Left cardiac atrium (tissue), 4 donors: ENCODE measurements at regions of chr9 and their contacts with region 1.

Region 1: DNA sequence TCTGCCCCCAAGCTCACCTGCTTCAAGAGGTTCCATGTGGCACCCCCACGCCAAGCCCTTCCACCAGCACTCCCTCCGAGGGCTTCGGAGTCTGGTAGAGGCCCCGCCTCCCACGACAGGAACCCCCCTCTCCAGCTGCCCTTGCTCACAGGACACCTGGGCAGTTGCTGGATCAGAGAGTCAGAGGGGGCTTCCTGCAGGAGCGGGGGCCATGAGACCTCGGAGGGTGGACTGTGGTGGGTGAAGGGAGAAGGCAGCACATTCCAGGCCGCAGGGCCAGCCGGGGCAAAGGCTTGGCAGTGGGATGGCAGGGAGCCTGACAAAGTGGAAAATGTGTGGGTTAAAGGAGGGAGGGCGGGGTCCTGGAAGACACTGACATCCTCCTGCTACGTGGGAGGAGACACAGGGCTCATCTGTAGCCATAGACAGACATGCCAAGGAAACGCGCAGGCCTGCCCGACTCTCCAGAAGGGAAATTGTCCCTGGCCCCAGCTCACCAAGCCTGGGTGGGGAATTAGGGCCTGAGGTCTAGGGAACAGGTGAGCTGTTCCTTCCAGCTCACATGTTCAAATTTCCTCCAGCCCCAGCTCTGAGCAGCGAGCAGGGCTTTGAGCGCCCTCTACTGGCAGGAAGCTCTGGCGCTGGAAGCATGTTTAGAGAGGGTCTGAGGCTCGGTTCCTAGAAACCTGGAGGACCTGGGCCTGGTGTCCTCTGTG is 74.2 kb downstream of the NTNG2 start:
- DNase-seq: peak; percentile 77
- ATAC-seq: peak in 1 of 2 donors; percentile 7

Region 2: GRCh38 chr9:131370638-131371037 is 865.5 kb before region 1 on chr9:
- intact Hi-C with region 1: no loop called
- DNase-seq: no peak
- ATAC-seq: no peak

Region 3: DNA sequence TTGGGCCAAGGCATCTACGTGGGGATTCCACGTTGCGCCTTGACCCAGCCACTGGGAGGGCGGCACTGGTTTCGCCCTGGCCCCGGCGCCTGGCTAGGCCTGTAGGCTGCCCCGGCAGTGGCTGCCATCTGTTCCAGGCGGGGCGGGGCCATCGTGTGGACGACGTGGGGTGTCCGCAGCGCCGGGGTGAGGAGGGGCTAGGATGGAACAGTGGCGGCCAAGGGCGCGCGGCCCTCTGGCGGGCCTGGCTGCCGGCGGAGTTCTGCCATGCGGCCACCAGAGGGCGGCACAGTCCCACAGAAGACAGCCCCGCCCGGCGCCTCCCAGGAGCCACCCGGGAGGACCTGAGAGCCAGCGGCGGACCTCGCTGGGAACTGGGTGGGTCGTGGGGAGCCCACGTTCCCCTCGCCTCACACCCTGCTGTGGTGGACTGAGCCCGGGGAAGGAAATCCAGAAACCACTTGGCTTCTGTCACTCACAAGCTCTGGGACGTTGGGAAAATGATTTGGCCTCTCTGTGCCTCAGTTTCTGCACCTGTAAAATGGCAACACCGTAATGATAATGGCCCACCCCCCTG is 473.7 kb before region 1 on chr9:
- intact Hi-C with region 1: loop called in 1 of 2 experiments (anchors 10 kb)
- DNase-seq: peak; percentile 80
- ATAC-seq: peak; percentile 93 to 96

Region 4: DNA sequence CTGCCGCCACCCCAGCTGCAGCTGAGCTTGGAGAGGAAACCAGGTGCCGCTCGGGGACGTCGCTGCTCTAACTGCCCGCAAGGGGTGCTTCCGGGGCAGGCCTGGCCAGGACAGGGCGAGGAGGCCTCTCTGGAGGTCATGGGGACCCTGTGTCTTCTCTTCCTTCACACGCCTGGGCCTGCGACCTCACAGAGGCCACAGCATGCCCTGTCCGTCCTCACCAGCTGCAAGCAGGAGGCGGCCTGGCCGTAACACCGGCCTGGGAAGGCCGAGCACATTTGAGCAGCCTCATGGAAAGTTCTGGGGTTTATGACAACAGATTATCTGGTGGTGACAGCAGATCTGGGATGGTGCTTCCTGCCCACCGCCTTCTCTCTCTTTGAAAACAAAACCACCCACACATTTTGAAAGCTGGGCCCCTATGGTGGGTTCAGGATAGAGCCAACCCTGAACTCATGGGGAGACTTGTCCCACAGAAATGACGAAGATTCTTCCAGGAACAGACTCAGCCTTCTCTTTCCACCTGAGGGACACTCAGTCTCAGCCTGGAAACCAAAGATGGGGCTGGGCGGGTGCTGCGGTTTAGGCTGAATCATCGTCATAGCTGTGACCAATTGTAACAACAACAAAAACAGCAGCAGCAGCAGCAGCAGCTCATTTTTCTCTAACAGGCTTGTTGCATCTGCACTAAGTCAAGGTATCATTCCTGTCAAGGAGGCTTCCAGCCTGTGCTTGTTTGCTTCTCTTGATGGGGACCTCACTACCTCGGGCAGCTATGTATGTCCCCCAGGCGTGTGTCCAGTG is 396.6 kb before region 1 on chr9:
- intact Hi-C with region 1: loop called in 1 of 2 experiments (anchors 5 kb)
- DNase-seq: no peak
- ATAC-seq: peak in 1 of 2 donors; percentile 44

Region 5: DNA sequence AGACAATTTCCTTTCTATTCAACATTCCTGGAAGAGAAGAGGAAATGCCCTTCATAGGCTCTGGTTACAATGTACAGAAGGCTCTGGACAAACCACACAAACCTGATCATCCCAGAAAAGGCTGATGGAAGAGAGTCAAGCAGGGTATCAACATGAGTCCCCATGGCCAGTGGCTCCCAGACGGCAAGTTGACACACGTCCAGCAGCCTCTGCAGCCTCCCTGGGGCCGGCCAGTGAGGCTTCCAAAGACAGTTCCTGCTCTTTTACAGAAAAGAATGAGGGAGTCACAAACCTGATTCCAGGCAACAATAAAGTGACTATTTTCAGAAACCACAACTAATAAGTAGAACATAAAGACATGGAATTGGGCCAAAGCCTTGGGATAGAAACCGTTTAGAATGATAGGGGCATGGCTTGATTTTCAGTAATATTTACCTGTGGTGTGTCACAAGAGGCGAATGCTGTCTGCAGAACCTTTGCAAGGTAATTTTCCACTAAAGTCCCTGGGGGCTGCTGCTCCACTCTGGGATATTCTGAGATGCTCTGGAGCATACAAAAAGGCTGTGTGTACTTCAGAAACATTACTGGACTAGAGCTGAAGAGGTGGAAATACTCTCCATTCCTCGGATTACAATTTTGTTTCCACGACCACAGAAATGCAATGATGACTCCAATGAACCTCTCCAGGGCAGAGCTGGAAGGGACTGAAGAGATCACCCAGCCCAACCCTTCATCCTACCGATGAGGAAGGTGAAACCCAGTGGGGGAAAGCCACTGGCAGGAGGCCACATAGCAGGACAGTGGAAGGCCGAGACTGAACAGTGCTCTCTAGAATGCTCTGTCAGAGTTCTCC is 166.8 kb before region 1 on chr9:
- intact Hi-C with region 1: loop called in 1 of 2 experiments (anchors 10 kb)
- DNase-seq: no peak
- ATAC-seq: no peak

Region 6: DNA sequence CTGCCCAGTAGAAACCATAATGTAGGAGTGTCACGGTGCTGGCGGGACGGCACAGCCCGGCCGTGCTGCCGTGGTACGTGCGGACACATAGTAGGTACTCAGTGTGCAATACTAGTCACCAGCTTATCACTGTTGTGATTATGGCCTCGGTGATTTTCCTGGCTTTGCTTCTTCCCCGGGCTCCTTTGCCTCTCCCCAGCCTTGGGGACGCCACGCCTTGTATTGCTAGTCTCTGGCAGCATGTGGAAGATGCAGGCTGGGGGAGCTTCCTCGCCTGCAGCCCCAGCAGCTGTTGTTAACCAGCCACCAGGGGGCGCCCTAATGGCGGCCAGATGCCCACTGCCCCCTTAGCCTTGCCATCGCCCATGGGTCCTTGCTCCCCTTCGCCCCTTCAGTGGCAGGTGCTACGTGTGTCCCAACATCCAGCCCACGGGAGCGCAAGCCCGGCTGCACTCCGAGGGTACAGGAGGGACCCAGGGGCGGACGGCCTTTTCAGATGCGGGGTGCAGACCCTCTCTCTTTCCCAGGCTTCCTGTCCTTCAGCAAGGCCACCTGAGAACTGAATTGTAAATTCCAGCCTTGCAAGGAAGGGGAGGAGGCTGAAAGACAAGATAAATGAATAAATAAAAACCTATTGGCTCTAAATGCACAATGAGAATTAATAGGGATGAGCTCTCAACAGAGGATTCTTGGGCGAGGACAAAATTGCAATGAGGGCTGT is 66.3 kb before region 1 on chr9:
- intact Hi-C with region 1: loop called (anchors 2 to 5 kb)
- DNase-seq: peak; percentile 65
- ATAC-seq: peak; percentile 62 to 70